ENCODE measurements at regions of chr3 and their contacts with region 1.

Region 1: GRCh38 chr3:3170998-3171397 is 8.5 kb downstream of the CRBN start:
- DNase-seq: no peak
- H3K4me3 ChIP-seq: no peak overlapping the region
- H3K27me3 ChIP-seq: no peaks in the 10 kb centered on the region
- CTCF ChIP-seq: peak; percentile 32

Region 2: DNA sequence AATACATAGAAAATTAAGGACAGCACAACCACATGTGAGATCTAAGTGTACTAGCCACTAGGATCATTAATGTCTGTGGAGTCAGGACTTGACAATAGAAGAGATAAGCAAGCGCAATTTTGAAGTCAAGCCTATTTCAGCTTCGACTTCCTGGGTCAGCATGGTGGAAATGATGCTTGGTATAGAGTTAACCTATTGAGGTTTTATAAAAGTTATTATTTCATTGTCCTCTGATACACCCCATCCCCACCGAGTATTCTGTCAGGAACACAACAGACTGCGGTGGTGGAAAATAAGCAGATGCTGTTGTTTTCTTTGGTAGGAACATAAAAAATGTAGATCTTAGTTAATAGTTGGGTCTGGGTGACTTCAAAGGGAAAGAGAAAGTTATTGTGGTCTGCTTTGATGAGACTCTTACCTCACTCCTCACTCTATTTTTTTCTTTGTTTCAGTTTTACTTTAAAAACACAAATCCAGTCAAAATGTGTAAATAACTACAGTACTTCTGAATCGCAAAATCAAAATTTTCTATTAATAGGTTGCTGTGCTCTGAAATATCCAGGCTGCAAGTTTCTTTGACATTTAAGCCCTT is 142.9 kb before region 1 on chr3:
- CTCF ChIA-PET with region 1: no interaction called
- POLR2A ChIA-PET with region 1: no interaction called
- DNase-seq: no peak
- H3K4me3 ChIP-seq: no peak overlapping the region
- H3K27me3 ChIP-seq: no peaks in the 10 kb centered on the region
- CTCF ChIP-seq: no peak

Region 3: DNA sequence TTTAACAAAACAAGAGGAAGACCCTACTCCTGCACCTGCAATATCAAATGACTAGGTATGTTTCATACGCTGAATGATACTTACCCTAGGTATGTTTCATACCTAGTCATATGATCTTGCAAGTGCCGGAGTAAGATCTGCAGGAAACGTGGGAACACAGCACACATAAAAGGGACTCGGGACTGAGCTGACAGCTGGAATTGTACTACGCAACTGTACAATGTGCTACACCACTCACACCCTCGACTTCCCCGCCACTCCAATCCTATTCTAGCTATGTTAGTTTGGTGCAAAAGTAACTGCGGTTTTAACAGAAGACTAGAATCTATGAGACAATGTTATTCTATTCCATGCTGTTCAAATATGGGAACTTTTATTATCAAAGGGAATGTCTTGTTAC is 13.5 kb before region 1 on chr3:
- CTCF ChIA-PET with region 1: interaction called, 11 read pairs
- POLR2A ChIA-PET with region 1: no interaction called
- DNase-seq: no peak
- H3K4me3 ChIP-seq: no peak overlapping the region
- H3K27me3 ChIP-seq: no peaks in the 10 kb centered on the region
- CTCF ChIP-seq: no peak

Region 4: DNA sequence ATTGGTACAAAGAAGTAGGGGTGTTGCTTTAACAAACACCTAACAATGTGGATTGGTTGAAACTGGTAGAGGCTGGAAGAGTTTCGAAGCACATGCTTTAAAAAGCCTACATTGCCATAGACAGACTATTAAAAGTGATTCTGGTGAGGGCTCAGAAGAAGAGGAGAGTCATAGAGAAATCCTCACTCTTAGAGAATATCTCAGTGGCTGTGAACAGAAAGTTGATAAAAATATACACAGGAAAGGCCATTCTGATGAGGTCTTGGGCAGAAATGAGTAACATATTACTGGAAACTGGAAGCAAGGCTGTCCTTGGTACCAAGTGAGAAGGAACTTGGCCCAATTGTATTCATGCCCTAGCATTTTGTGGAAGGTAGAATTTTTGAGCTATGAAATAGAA is 182.2 kb after region 1 on chr3:
- CTCF ChIA-PET with region 1: no interaction called
- POLR2A ChIA-PET with region 1: no interaction called
- DNase-seq: no peak
- H3K4me3 ChIP-seq: no peak overlapping the region
- H3K27me3 ChIP-seq: no peaks in the 10 kb centered on the region
- CTCF ChIP-seq: no peak

Measured in BJ (cell line).